ENCODE measurements at regions of chr22 and their contacts with region 1.

Region 1: DNA sequence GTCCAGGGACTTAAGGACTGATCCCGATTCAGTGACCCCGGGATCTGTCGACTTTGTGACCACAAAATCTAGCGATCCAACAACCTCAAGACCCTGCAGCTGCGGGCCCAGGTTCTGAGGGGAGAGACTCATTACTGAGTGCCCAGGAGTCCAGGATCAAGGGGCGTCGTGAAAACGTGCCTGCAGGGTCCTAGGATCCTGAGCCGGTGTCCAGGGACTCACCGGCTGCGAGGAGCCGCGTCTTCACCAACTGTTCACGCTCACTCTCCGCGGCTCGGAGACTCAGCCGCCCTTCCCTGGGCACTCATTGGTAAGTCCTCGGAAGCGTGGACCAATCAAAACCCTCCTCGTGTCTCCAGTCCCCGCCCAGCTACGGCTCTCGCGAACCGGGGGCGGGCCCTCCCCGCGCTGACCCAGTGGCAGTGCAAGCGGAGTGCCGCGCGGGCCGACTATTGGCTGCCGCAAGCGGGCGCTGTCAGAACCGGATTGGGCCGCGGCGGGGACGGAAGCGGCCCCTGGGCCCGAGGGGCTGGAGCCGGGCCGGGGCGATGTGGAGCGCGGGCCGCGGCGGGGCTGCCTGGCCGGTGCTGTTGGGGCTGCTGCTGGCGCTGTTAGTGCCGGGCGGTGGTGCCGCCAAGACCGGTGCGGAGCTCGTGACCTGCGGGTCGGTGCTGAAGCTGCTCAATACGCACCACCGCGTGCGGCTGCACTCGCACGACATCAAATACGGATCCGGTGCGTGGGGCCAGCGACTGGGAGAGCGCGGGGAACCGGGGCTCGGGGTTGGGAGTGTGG is at the start of gene SDF2L1:
- DNase-seq: peak; percentile 98 to 99 (median 98)
- H3K4me3 ChIP-seq: peak within 1 kb of the TSS; percentile 67 to 85
- H3K4me3 Mint-ChIP-seq: peak within 1 kb of the TSS; percentile 77 to 89 (median 86)
- H3K27ac ChIP-seq: peak within 1 kb of the TSS; percentile 63
- H3K27ac Mint-ChIP-seq: peak within 1 kb of the TSS; percentile 41 to 95 (median 91)
- H3K4me1 ChIP-seq: peaks cover 25% of the 10 kb centered on the region
- H3K4me1 Mint-ChIP-seq: peaks cover 17 to 39% (median 29%) of the 10 kb centered on the region in 4 donors
- H3K27me3 ChIP-seq: no peaks in the 10 kb centered on the region
- H3K27me3 Mint-ChIP-seq: peaks cover 0 to 1% of the 10 kb centered on the region in 2 donors
- total RNA-seq, gene SDF2L1: 39.6 to 44.3 TPM

Region 2: GRCh38 chr22:21615731-21616130 is 26.3 kb before region 1 on chr22:
- CTCF ChIA-PET with region 1: interaction called, 10 read pairs
- POLR2A ChIA-PET with region 1: interaction called, 7 read pairs
- intact Hi-C with region 1: no loop called
- DNase-seq: no peak
- H3K4me3 ChIP-seq: no peak overlapping the region
- H3K4me3 Mint-ChIP-seq: no peak overlapping the region
- H3K27ac ChIP-seq: no peak overlapping the region
- H3K27ac Mint-ChIP-seq: peak overlapping the region in 3 of 7 donors; percentile 17 to 60 (median 26)
- H3K4me1 ChIP-seq: peaks cover 4% of the 10 kb centered on the region
- H3K4me1 Mint-ChIP-seq: peaks cover 10 to 38% (median 17%) of the 10 kb centered on the region in 4 donors
- H3K27me3 ChIP-seq: no peaks in the 10 kb centered on the region
- H3K27me3 Mint-ChIP-seq: no peaks in the 10 kb centered on the region

Region 3: GRCh38 chr22:21624120-21624879 is 17.7 kb before region 1 on chr22:
- CTCF ChIA-PET with region 1: interaction called, 245 read pairs
- POLR2A ChIA-PET with region 1: interaction called, 201 read pairs
- intact Hi-C with region 1: loop called (anchors 1 kb)
- DNase-seq: peak in 4 of 5 donors; percentile 16 to 29 (median 23)
- H3K4me3 ChIP-seq: no peak overlapping the region
- H3K4me3 Mint-ChIP-seq: peak overlapping the region in 1 of 8 donors; percentile 20
- H3K27ac ChIP-seq: no peak overlapping the region
- H3K27ac Mint-ChIP-seq: peak overlapping the region; percentile 52 to 92 (median 73)
- H3K4me1 ChIP-seq: peaks cover 50% of the 10 kb centered on the region
- H3K4me1 Mint-ChIP-seq: peaks cover 22 to 64% (median 33%) of the 10 kb centered on the region in 4 donors
- H3K27me3 ChIP-seq: no peaks in the 10 kb centered on the region
- H3K27me3 Mint-ChIP-seq: no peaks in the 10 kb centered on the region

Region 4: DNA sequence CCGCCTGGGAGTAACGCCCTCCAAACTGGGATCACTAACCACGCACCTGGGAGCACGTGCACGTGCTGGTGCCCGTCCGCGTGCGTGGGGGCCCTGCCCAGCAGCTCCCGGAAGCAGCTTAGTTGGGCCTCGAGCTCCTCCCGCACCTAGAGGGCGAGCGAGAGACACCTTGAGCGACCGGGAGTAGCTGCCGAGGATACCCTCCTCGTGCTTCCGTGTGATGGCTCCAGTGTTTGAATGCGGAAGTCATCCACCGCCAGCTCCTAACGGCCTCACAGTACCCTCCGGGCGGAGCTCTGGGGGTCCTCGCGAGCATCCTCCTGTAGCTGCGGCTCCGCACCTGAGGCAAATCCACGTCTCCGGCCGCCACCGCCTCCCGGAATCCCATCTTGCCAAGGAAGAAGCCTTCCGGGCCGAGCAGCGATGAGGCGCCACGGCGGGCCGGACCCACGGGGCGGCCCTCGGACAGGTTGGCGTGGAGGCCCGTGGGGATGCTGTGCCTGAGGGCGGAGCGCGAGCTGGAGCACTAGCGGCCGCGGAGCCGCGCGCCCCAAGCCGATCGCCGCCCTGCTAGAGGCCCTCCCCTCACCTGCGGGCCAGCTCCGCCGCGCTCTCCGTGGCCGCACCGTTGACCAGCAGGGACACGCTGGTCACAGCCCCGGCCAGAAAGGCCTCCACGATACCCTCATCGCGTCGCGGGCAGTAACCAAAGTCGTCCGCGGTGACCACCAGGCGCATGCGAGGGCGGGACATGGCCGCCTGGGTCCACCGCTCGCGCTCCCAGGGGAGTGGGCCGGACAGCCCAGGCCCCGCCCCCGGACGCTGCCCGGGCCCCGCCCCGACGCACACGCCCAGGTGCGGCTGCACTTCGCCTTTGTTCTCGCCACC is 12.5 kb before region 1 on chr22 and contains the start of gene YDJC:
- CTCF ChIA-PET with region 1: interaction called, 245 read pairs
- POLR2A ChIA-PET with region 1: interaction called, 201 read pairs
- intact Hi-C with region 1: loop called (anchors 1 kb)
- DNase-seq: peak; percentile 93 to 95 (median 93)
- H3K4me3 ChIP-seq: peak within 1 kb of the TSS; percentile 78 to 92
- H3K4me3 Mint-ChIP-seq: peak within 1 kb of the TSS; percentile 92 to 95 (median 94)
- H3K27ac ChIP-seq: peak within 1 kb of the TSS; percentile 87
- H3K27ac Mint-ChIP-seq: peak within 1 kb of the TSS; percentile 89 to 98 (median 96)
- H3K4me1 ChIP-seq: peaks cover 64% of the 10 kb centered on the region
- H3K4me1 Mint-ChIP-seq: peaks cover 25 to 65% (median 43%) of the 10 kb centered on the region in 4 donors
- H3K27me3 ChIP-seq: no peaks in the 10 kb centered on the region
- H3K27me3 Mint-ChIP-seq: no peaks in the 10 kb centered on the region
- total RNA-seq, gene YDJC: 45.7 to 46.0 TPM

Region 5: GRCh38 chr22:21652010-21652546 is 10.1 kb after region 1 on chr22:
- CTCF ChIA-PET with region 1: interaction called, 17 read pairs
- POLR2A ChIA-PET with region 1: interaction called, 26 read pairs
- intact Hi-C with region 1: loop called (anchors 1 kb)
- DNase-seq: peak; percentile 71 to 88 (median 75)
- H3K4me3 ChIP-seq: peak overlapping the region; percentile 56 to 74
- H3K4me3 Mint-ChIP-seq: peak overlapping the region; percentile 81 to 95 (median 88)
- H3K27ac ChIP-seq: peak overlapping the region; percentile 42
- H3K27ac Mint-ChIP-seq: peak overlapping the region in 6 of 7 donors; percentile 13 to 87 (median 36)
- H3K4me1 ChIP-seq: peaks cover 31% of the 10 kb centered on the region
- H3K4me1 Mint-ChIP-seq: peaks cover 13 to 32% (median 22%) of the 10 kb centered on the region in 4 donors
- H3K27me3 ChIP-seq: no peaks in the 10 kb centered on the region
- H3K27me3 Mint-ChIP-seq: no peaks in the 10 kb centered on the region

Region 6: GRCh38 chr22:21657361-21658032 is 15.5 kb after region 1 on chr22:
- CTCF ChIA-PET with region 1: interaction called, 17 read pairs
- POLR2A ChIA-PET with region 1: interaction called, 26 read pairs
- intact Hi-C with region 1: loop called (anchors 1 kb)
- DNase-seq: peak; percentile 69 to 80 (median 70)
- H3K4me3 ChIP-seq: peak overlapping the region; percentile 52 to 57
- H3K4me3 Mint-ChIP-seq: peak overlapping the region; percentile 80 to 92 (median 88)
- H3K27ac ChIP-seq: peak overlapping the region; percentile 35
- H3K27ac Mint-ChIP-seq: peak overlapping the region in 4 of 7 donors; percentile 42 to 80 (median 68)
- H3K4me1 ChIP-seq: peaks cover 19% of the 10 kb centered on the region
- H3K4me1 Mint-ChIP-seq: peaks cover 10 to 14% (median 11%) of the 10 kb centered on the region in 4 donors
- H3K27me3 ChIP-seq: no peaks in the 10 kb centered on the region
- H3K27me3 Mint-ChIP-seq: no peaks in the 10 kb centered on the region

Region 7: GRCh38 chr22:21666786-21667185 is 24.8 kb after region 1 on chr22:
- CTCF ChIA-PET with region 1: interaction called, 10 read pairs
- POLR2A ChIA-PET with region 1: interaction called, 22 read pairs
- intact Hi-C with region 1: loop called (anchors 1 kb)
- DNase-seq: no peak
- H3K4me3 ChIP-seq: peak overlapping the region; percentile 43 to 97
- H3K4me3 Mint-ChIP-seq: peak overlapping the region; percentile 89 to 100 (median 97)
- H3K27ac ChIP-seq: peak overlapping the region; percentile 83
- H3K27ac Mint-ChIP-seq: peak overlapping the region; percentile 52 to 99 (median 76)
- H3K4me1 ChIP-seq: peaks cover 25% of the 10 kb centered on the region
- H3K4me1 Mint-ChIP-seq: peaks cover 19 to 45% (median 32%) of the 10 kb centered on the region in 4 donors
- H3K27me3 ChIP-seq: no peaks in the 10 kb centered on the region
- H3K27me3 Mint-ChIP-seq: no peaks in the 10 kb centered on the region

Measured in CD4-positive, alpha-beta memory T cell (primary cell).